ENCODE measurements at regions of chr19 and their contacts with region 1.

Region 1: GRCh38 chr19:4638828-4639530 is at the start of gene TNFAIP8L1:
- DNase-seq: peak; percentile 99
- H3K4me3 Mint-ChIP-seq: peak within 1 kb of the TSS; percentile 94
- H3K27ac Mint-ChIP-seq: peak within 1 kb of the TSS; percentile 94
- H3K4me1 Mint-ChIP-seq: peaks cover 42% of the 10 kb centered on the region
- H3K27me3 Mint-ChIP-seq: no peaks in the 10 kb centered on the region
- total RNA-seq, gene TNFAIP8L1: 19.6 to 21.9 TPM

Region 2: GRCh38 chr19:4576016-4576933 is 62.7 kb before region 1 on chr19:
- CTCF ChIA-PET with region 1: interaction called, 12 read pairs
- POLR2A ChIA-PET with region 1: no interaction called
- DNase-seq: peak; percentile 74
- H3K4me3 Mint-ChIP-seq: no peak overlapping the region
- H3K27ac Mint-ChIP-seq: no peak overlapping the region
- H3K4me1 Mint-ChIP-seq: no peaks in the 10 kb centered on the region
- H3K27me3 Mint-ChIP-seq: peaks cover 40% of the 10 kb centered on the region

Region 3: GRCh38 chr19:4593409-4593851 is 45.5 kb before region 1 on chr19:
- CTCF ChIA-PET with region 1: interaction called, 17 read pairs
- POLR2A ChIA-PET with region 1: no interaction called
- DNase-seq: no peak
- H3K4me3 Mint-ChIP-seq: no peak overlapping the region
- H3K27ac Mint-ChIP-seq: no peak overlapping the region
- H3K4me1 Mint-ChIP-seq: peaks cover 7% of the 10 kb centered on the region
- H3K27me3 Mint-ChIP-seq: peaks cover 31% of the 10 kb centered on the region

Region 4: GRCh38 chr19:4669723-4670480 is 30.9 kb after region 1 on chr19 and contains the start of gene MYDGF:
- CTCF ChIA-PET with region 1: interaction called, 12 read pairs
- POLR2A ChIA-PET with region 1: no interaction called
- DNase-seq: peak; percentile 94
- H3K4me3 Mint-ChIP-seq: peak within 1 kb of the TSS; percentile 86
- H3K27ac Mint-ChIP-seq: peak within 1 kb of the TSS; percentile 85
- H3K4me1 Mint-ChIP-seq: peaks cover 17% of the 10 kb centered on the region
- H3K27me3 Mint-ChIP-seq: no peaks in the 10 kb centered on the region
- total RNA-seq, gene MYDGF: 36.2 to 45.3 TPM

Measured in activated CD4-positive, alpha-beta T cell treated with anti-CD3 and anti-CD28 coated beads, Interleukin-2, amount 10 ng/mL, durations not matched to agents 7 days and 5 days (primary cell).